AG04449 (cell line): ENCODE measurements at regions of chr2 and their contacts with region 1.

Region 1: DNA sequence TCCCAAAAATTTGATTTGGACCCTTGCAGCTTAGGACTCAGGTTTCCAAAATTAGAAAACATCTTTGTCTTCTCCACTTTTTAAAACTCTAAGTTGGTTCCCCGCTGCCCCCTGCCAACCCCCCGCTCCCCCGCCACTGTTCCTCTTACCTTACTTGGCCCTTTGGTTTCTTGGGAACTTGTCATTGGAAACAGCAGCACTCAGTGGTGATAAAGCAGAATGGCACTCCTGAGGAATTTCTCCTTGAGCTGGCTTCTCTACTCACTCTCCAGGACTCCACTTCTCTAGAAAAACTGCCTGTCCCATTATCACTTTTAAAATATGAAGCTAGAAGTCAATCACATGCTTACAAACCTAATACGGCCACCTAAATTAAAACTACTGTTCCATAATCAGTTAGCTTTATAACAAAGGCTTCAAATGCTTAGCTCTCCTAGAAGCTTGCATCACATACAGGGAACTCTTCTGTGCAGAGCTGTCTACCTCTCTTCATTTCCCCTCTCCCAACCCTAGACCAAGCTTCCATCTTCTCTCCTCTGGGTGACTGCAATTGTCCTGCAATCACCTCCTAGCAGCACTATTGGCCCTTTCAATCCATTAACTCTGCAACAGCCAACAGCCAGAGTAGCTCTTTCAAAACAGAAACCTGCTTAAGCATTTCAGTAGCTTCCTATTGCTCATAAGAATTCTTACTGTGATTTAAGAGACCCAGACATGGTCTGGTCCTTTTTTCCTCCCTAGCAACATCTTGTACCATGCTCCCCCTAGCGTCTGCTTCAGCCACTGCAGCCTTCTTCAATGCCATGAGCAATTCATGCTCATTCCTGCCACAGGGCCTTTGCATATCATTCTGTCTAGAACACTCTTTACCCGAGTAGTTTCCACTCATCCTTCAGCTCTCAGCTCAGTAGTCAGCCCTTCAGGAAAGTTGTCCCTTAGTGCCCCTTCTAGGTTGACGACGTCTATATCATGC is 15.2 kb upstream of the PLEKHM3 start:
- DNase-seq: no peak
- H3K4me3 ChIP-seq: no peak overlapping the region
- CTCF ChIP-seq: peak; percentile 77

Region 2: DNA sequence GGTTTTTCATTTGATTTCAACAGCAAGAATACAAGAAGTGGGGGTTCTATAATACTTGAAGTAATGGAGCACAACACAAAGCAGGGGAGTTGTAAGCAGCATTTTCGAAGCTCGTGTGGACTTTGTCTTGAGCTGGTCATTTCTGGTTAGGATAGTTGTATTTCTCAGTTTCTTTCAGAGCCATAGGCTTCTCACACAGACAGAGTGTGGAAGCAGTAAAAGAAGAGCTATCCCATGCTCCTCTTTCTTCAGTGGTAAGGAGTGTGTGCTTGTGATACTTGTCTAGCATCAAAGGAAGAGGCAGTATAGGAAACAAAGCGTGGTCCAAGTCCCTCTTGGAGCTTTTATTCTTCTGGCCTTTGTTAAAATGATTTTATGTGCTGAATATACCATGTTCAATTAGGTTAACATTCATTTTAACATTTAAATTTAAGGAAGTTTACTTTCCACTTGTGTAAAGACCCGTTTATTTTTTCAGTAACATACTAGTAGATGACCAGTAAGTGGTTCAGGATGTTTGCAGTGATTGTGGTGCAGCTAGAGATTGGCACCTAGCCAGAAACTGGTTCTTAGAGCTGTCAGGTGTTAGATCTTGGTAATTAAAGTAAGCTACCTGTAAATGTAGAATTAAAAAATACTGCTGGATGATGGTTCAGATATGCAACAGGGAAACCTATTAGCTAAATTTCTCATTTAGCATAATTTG is 314.5 kb before region 1 on chr2:
- CTCF ChIA-PET with region 1: interaction called, 17 read pairs
- POLR2A ChIA-PET with region 1: no interaction called
- DNase-seq: no peak
- H3K4me3 ChIP-seq: no peak overlapping the region
- CTCF ChIP-seq: no peak

Region 3: GRCh38 chr2:207746131-207746530 is 294.4 kb before region 1 on chr2:
- CTCF ChIA-PET with region 1: interaction called, 252 read pairs
- POLR2A ChIA-PET with region 1: no interaction called
- DNase-seq: peak; percentile 26
- H3K4me3 ChIP-seq: no peak overlapping the region
- CTCF ChIP-seq: peak; percentile 87

Region 4: DNA sequence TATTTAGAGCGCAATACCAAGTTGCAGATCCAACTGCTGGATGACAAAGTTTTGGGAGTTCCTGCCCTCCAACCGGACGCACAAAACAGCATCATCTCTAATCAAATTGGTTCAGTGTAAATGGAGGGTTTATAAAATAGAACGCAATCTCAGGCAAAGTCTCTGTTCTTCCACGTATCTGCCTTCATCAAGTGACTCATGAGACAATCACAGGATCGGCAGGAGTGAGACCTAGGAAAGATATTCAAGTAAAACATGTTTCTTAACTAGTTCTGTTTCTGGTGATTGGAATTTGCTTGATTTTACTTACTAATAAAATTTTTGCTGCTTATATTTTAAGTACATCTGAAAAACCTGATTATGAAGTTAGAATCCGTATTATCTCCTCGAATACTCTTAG is 278.3 kb before region 1 on chr2:
- CTCF ChIA-PET with region 1: interaction called, 23 read pairs
- POLR2A ChIA-PET with region 1: no interaction called
- DNase-seq: no peak
- H3K4me3 ChIP-seq: no peak overlapping the region
- CTCF ChIP-seq: no peak

Region 5: GRCh38 chr2:207792244-207792785 is 248.2 kb before region 1 on chr2:
- CTCF ChIA-PET with region 1: interaction called, 16 read pairs
- POLR2A ChIA-PET with region 1: no interaction called
- DNase-seq: no peak
- H3K4me3 ChIP-seq: no peak overlapping the region
- CTCF ChIP-seq: no peak

Region 6: DNA sequence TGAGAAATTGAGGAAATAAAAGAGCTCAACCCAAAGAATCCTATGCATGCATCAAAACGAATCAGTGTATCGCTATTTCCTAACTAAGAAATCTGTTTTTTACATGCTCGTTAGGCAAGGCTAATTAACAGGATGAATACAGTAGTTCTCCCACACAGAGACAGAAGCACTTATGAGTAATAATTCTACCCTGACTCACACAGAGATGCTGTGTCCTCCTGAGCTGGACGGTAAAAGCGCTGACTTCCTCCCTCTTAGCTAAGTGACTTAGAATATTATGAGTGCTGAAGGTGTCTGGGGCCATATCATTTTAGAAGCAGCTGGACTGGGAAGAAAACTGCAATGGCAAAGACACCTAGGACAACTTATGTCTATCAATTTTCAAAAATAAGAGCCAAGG is 33.7 kb before region 1 on chr2:
- CTCF ChIA-PET with region 1: interaction called, 12 read pairs
- POLR2A ChIA-PET with region 1: interaction called, 3 read pairs
- DNase-seq: no peak
- H3K4me3 ChIP-seq: no peak overlapping the region
- CTCF ChIP-seq: no peak

Region 7: GRCh38 chr2:208064220-208064961 is 23.9 kb after region 1 on chr2:
- CTCF ChIA-PET with region 1: interaction called, 28 read pairs
- POLR2A ChIA-PET with region 1: no interaction called
- DNase-seq: peak; percentile 78
- H3K4me3 ChIP-seq: no peak overlapping the region
- CTCF ChIP-seq: no peak